Cardiac septum (tissue), 1 donor: ENCODE measurements at regions of chr9 and their contacts with region 1.

Region 1: DNA sequence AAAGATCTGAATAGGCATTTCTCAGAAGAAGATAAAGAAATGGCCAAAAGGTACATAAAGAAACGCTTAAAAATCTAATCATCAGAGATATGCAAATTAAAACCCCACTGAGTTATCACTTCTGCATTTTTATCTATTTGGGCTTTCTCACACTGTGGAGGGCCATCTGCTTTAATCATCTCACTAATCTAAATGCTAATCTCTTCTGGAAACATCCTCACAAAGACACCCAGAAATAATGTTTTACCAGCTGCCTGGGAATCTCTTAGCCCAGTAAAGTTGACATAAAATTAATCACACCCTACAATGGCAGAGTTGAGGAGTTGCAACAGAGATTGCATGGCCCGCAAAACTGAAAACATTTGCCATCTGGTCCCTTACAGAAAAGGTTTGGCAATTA is 407.9 kb upstream of the CYLC2 start:
- DNase-seq: no peak

Region 2: DNA sequence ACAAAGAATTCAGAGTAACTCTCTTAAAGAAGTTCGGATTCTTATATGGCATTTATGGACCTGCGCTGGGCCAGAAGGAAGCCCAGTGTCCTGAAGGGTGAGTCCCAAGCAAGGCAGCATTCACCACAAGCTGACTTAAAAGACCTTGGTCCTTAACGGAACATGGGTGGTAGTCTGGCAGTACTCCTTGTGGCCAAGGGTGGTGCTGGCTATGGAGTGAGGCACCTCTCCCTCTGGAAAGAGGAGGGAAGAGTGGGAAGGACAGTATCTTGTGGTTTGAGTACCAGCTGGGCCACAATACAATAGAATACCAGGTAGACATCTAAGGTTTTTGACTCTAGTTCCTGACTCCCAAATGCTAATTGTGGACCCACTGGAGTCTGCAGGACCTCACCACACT is 17.8 kb before region 1 on chr9:
- intact Hi-C with region 1: no loop called
- DNase-seq: no peak

Region 3: GRCh38 chr9:102642651-102643050 is 55.4 kb after region 1 on chr9:
- intact Hi-C with region 1: loop called (anchors 10 kb)
- DNase-seq: no peak